Activated naive CD4-positive, alpha-beta T cell treated with anti-CD3 and anti-CD28 coated beads, Interleukin-2, amount 10 ng/mL, durations not matched to agents 7 days and 5 days (primary cell): ENCODE measurements at regions of chr3 and their contacts with region 1.

Region 1: GRCh38 chr3:12994607-12995388 is 78.4 kb downstream of the IQSEC1 start:
- DNase-seq: peak; percentile 86
- H3K4me3 Mint-ChIP-seq: peak overlapping the region; percentile 73
- H3K27ac Mint-ChIP-seq: no peak overlapping the region
- H3K4me1 Mint-ChIP-seq: peaks cover 34% of the 10 kb centered on the region
- H3K27me3 Mint-ChIP-seq: peaks cover 22% of the 10 kb centered on the region

Region 2: DNA sequence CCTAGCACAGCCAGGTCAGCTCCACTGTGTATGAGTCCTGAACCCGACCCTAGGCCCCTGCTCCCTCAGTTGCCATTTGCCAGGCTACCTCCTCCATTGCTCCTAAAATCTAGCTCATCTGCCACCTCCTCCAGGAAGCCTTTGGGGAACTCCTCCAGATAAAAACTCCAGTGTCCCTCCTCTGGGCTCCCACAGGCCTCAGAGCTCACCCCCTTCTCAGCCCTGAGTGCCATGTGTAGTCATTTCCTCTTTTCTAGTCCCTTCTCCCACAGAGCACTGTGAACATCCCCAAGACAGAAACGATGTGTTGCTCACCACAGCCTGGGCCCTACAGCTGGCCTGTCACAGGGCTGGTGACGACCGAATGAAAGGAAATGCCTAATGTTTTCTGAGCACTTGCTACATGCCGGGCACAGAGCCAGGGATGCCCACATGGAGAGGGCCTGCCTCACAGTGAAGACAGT is 17.5 kb after region 1 on chr3:
- CTCF ChIA-PET with region 1: interaction called, 32 read pairs
- DNase-seq: peak; percentile 57
- H3K4me3 Mint-ChIP-seq: peak overlapping the region; percentile 76
- H3K27ac Mint-ChIP-seq: peak overlapping the region; percentile 96
- H3K4me1 Mint-ChIP-seq: peaks cover 79% of the 10 kb centered on the region
- H3K27me3 Mint-ChIP-seq: no peaks in the 10 kb centered on the region